PC-9 (cell line): ENCODE measurements at regions of chr10 and their contacts with region 1.

Region 1: GRCh38 chr10:61189912-61190311 is 245.9 kb upstream of the RHOBTB1 start:
- DNase-seq: no peak
- H3K4me3 ChIP-seq: no peak overlapping the region
- H3K27ac ChIP-seq: no peak overlapping the region
- H3K4me1 ChIP-seq: no peaks in the 10 kb centered on the region
- H3K27me3 ChIP-seq: no peaks in the 10 kb centered on the region
- CTCF ChIP-seq: no peak

Region 2: DNA sequence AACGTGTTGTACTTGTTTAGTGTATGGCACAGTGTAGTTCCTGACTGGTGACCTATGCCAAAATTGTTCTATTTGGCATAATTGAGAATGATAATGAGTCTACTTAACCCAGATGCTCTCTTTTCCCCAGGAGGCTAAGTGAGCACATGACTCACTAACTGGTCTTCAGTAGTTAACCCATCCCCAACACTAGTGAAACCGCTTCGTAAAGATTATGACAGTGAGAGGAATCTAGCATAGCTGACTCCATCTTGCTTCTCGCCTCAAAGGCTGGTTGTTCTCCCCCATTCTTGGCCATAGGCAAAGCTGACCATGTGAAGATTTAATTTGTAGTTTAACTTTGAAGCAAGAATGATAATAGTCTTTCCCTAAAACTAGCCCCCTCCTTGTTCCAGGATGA is 364.4 kb before region 1 on chr10:
- CTCF ChIA-PET with region 1: no interaction called
- POLR2A ChIA-PET with region 1: interaction called, 13 read pairs
- intact Hi-C with region 1: no loop called
- DNase-seq: no peak
- H3K4me3 ChIP-seq: no peak overlapping the region
- H3K27ac ChIP-seq: no peak overlapping the region
- H3K4me1 ChIP-seq: no peaks in the 10 kb centered on the region
- H3K27me3 ChIP-seq: no peaks in the 10 kb centered on the region
- CTCF ChIP-seq: no peak

Region 3: GRCh38 chr10:61465901-61466632 is 276.2 kb after region 1 on chr10:
- CTCF ChIA-PET with region 1: no interaction called
- POLR2A ChIA-PET with region 1: no interaction called
- intact Hi-C with region 1: no loop called
- DNase-seq: no peak
- H3K4me3 ChIP-seq: no peak overlapping the region
- H3K27ac ChIP-seq: no peak overlapping the region
- H3K4me1 ChIP-seq: no peaks in the 10 kb centered on the region
- H3K27me3 ChIP-seq: no peaks in the 10 kb centered on the region
- CTCF ChIP-seq: no peak